ENCODE measurements at regions of chr1 and their contacts with region 1.

Region 1: DNA sequence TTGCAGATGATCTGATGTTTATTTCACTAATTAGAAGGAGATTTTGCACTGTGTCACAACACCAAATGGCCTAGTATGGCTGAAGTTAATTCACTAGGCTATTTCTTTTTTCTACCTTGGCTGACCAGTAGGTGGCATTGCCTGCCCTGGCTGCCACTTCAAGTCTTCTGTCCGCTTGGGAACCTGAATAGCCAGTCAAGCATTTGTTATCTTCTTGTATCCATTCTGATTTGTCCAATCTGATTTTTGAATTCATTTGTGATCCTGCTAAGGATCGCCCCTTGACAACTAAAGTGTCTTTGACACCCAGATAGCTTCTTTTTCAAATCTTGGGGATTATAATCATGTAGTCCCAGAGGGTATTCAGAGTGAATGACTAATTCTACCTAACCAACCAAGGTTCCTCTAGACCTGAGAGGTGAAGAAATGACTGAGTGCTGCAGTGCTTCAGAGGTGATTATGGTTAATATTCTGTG is 99.4 kb downstream of the GIPC2 start:
- DNase-seq: peak; percentile 33
- H3K4me3 ChIP-seq: no peak overlapping the region
- CTCF ChIP-seq: peak; percentile 73

Region 2: DNA sequence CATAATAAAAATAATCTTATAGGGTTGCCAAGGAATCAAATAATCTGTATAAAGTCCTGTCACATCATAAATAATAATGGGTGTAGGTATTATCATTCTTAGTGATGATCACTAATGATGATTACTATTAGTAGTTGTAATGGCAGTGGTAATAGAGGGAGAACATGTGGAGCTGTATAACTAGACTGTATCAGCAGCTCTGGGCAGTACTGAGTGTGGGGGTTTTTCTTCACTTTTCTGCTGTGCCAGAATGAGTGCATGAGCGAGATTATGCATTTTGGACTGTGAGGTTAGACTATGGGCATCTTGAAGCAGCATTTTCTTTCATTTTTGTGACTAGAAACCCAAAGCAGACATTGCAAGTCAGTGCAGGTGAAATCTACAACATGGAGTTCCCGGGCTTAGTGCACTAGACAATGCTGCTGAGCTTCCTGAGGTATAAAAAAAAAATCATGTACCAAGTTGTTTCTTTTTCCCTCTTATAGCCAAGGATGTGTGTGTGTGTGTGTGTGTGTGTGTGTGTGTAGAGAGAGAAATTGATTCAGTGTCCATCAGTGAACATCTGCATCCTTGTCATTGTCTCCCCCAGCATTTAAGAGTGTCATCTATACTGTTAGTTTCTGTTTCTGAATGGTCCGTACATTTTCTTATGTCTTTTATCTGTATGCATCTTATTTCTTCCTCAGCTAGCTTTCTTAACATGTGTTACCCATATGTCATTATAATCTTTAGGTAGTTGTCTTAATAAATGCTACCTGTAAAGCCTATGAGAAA is 12.8 kb before region 1 on chr1:
- CTCF ChIA-PET with region 1: interaction called, 103 read pairs
- POLR2A ChIA-PET with region 1: no interaction called
- DNase-seq: no peak
- H3K4me3 ChIP-seq: no peak overlapping the region
- CTCF ChIP-seq: no peak

Region 3: GRCh38 chr1:78333502-78333901 is 188.4 kb after region 1 on chr1:
- CTCF ChIA-PET with region 1: interaction called, 11 read pairs
- POLR2A ChIA-PET with region 1: no interaction called
- DNase-seq: no peak
- H3K4me3 ChIP-seq: no peak overlapping the region
- CTCF ChIP-seq: peak; percentile 49

Region 4: DNA sequence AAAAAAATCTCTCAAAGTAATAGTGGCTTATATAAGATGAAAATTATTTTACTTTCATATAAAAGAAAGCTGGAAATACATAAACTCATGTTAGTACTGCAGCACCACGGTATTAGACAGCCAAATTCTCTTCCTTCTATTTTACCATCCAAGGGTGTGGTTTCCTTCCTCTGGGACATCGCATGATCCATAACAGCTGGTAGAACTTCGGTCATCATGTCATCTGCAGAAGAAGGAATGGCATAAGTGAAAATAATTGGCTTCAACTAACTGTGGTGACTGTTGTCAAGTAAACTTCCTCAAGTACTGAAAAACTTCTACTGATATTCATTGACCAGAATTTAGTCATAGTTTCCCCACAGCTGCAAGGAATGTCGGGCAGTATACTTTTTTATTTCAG is 446.8 kb after region 1 on chr1:
- CTCF ChIA-PET with region 1: interaction called, 11 read pairs
- POLR2A ChIA-PET with region 1: no interaction called
- DNase-seq: no peak
- H3K4me3 ChIP-seq: no peak overlapping the region
- CTCF ChIP-seq: no peak

Region 5: GRCh38 chr1:78617615-78618026 is 472.5 kb after region 1 on chr1:
- CTCF ChIA-PET with region 1: interaction called, 181 read pairs
- POLR2A ChIA-PET with region 1: no interaction called
- DNase-seq: peak; percentile 36
- H3K4me3 ChIP-seq: no peak overlapping the region
- CTCF ChIP-seq: peak; percentile 65

Measured in AG04449 (cell line).